Endothelial cell of umbilical vein (primary cell): ENCODE measurements at regions of chr3 and their contacts with region 1.

Region 1: GRCh38 chr3:124409789-124410261 is 320.4 kb upstream of the UMPS start:
- DNase-seq: peak; percentile 33
- H3K4me3 ChIP-seq: no peak overlapping the region
- H3K27ac ChIP-seq: peak overlapping the region; percentile 55
- H3K4me1 ChIP-seq: peaks cover 33% of the 10 kb centered on the region
- H3K27me3 ChIP-seq: no peaks in the 10 kb centered on the region
- CTCF ChIP-seq: no peak
- POLR2A ChIP-seq: no peak

Region 2: GRCh38 chr3:124429129-124429815 is 19.4 kb after region 1 on chr3:
- CTCF ChIA-PET with region 1: interaction called, 21 read pairs
- POLR2A ChIA-PET with region 1: no interaction called
- dilution Hi-C with region 1: no loop called
- intact Hi-C with region 1: loop called (anchors 1 kb)
- DNase-seq: peak; percentile 88
- H3K4me3 ChIP-seq: no peak overlapping the region
- H3K27ac ChIP-seq: peak overlapping the region; percentile 23
- H3K4me1 ChIP-seq: peaks cover 27% of the 10 kb centered on the region
- H3K27me3 ChIP-seq: no peaks in the 10 kb centered on the region
- CTCF ChIP-seq: no peak
- POLR2A ChIP-seq: no peak

Region 3: DNA sequence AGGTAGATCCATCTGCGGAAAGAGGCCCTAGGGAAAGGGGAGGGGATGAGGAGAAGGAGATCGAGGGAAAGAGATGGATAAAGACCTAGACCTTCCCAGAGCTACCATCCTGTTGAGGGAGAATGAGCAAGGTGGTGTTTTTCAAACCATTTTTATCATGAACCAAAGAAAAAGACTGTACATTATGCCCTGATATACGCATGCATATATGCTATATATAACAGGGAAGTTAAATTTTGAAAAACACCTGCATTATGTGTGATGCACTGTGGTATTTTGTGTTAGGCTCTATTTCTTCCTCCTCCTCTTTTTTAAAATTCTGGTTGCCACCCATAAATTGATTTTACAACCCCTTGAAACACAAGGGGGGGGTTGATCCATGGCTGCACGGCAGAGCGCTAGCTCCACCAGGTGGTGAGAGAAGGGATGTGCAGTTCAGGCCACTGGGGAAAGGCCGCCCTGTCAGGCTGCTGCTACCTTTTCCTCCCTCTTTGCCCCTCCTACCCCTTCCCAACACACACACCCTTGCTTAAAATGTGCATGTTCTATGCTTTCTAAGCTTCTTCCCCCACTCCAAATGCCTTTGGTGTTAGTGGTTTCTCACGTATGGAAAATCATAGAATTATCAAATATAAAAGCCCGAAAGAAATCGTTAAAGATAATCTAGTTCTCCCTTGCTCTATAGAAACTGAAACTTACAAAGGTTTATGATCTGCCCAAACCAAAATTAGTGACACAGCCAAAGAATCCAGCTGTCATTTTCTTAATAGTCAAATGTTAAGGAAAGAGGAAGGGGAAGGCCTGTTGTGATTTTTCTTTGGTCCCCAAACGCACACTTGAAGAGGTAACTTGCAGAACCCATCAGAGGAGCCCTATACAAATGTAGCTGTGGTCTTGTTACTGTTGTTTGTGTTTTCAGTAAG is 58.4 kb after region 1 on chr3:
- CTCF ChIA-PET with region 1: no interaction called
- POLR2A ChIA-PET with region 1: no interaction called
- dilution Hi-C with region 1: no loop called
- intact Hi-C with region 1: loop called (anchors 5 kb)
- DNase-seq: peak; percentile 58
- H3K4me3 ChIP-seq: no peak overlapping the region
- H3K27ac ChIP-seq: no peak overlapping the region
- H3K4me1 ChIP-seq: no peaks in the 10 kb centered on the region
- H3K27me3 ChIP-seq: peaks cover 0 to 2% of the 10 kb centered on the region in 2 experiments
- CTCF ChIP-seq: peak; percentile 91 to 97
- POLR2A ChIP-seq: no peak

Region 4: DNA sequence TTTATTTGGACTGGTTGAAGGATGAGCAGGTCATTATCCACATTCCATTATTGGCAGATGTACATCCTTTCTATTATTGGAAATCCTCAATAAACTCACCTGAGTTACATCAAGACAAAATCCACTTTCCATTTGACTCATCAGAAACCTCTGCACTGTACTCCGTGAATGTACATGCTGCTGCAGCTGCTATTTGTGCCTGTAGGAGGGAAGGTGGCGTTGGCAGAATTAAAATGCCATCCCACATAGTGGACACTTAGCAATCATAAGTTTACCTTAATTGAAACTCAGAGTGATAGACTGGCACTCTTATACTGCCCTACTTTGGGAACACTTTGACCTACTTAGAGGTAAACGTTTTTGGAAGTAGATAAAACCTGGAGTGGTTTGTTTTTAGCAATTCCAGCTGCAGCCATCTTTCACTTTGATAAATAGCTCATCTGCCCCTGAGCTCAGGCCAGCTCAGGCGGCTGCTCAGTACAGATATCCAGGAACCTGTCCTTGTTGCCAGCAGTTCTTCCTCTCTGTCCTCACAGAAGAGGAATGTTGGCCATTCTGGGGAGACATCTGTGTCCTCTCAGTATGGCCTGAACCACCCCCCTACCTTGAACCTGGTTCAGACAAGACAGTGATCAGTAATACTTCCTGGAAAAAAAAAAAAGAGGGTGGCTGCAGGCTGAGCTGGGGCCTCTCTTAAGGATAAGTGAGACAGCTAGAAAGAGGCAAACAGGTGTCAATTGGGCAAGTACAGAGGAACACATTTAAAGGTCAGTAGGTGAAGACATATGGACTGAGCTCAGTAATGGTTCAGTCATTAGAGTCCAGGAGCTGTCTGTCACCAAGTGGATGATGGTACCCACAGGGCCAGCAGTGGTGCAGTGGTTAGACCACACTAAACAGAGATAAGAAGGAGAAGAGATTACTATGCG is 167.0 kb after region 1 on chr3:
- CTCF ChIA-PET with region 1: no interaction called
- POLR2A ChIA-PET with region 1: no interaction called
- dilution Hi-C with region 1: no loop called
- intact Hi-C with region 1: no loop called
- DNase-seq: no peak
- H3K4me3 ChIP-seq: no peak overlapping the region
- H3K27ac ChIP-seq: no peak overlapping the region
- H3K4me1 ChIP-seq: no peaks in the 10 kb centered on the region
- H3K27me3 ChIP-seq: no peaks in the 10 kb centered on the region
- CTCF ChIP-seq: no peak
- POLR2A ChIP-seq: no peak

Region 5: DNA sequence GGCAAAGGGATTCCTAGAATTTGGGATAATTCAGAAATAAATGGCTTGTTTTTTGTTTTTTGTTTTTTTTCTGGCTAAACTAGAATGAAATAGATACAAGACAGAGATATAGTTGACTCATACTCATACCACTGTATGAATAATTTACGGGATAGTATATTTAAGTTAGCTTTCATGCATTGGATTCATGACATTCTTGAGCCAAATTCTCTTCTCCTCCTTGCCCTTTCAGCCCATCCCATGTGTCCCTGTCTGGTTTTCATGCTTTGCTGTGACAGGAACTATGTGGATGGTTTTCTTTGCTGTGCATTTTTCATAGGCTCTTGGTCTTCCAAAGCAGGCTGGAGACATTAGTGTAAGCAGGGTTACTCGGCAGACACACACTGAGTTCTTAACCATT is 253.9 kb after region 1 on chr3:
- CTCF ChIA-PET with region 1: no interaction called
- POLR2A ChIA-PET with region 1: no interaction called
- dilution Hi-C with region 1: no loop called
- intact Hi-C with region 1: no loop called
- DNase-seq: no peak
- H3K4me3 ChIP-seq: no peak overlapping the region
- H3K27ac ChIP-seq: no peak overlapping the region
- H3K4me1 ChIP-seq: no peaks in the 10 kb centered on the region
- H3K27me3 ChIP-seq: no peaks in the 10 kb centered on the region
- CTCF ChIP-seq: no peak
- POLR2A ChIP-seq: no peak